ENCODE measurements at regions of chr4 and their contacts with region 1.

Region 1: DNA sequence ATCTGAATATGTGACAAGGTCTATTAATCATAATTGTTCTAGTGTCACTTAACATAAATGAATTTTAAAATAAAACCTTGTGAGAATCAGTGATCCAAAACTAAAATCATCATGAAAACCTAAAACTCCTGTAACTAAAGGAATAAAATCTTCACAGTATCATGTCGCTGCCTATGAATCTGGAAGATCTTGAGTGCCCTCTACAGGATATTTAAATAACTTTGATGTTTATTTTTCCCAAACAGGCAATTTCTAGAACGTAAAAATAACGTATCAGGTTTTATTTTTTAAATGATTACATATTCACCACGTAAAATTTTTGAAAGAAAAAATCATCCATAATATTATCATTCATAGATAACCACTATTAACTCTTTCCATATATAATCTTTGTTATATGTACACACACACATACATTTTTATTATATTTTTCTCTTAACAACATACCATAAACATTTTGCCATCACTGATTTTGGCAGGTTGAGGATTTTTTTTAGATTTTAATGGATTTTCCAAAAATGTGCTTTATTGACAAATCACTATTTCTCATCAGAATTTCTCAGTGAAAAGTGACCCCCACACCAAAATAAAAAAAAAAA is 79.6 kb downstream of the COMMD8 start:
- DNase-seq: no peak
- H3K4me3 Mint-ChIP-seq: no peak overlapping the region
- H3K27ac Mint-ChIP-seq: no peak overlapping the region
- H3K4me1 Mint-ChIP-seq: no peaks in the 10 kb centered on the region
- H3K27me3 Mint-ChIP-seq: no peaks in the 10 kb centered on the region

Region 2: DNA sequence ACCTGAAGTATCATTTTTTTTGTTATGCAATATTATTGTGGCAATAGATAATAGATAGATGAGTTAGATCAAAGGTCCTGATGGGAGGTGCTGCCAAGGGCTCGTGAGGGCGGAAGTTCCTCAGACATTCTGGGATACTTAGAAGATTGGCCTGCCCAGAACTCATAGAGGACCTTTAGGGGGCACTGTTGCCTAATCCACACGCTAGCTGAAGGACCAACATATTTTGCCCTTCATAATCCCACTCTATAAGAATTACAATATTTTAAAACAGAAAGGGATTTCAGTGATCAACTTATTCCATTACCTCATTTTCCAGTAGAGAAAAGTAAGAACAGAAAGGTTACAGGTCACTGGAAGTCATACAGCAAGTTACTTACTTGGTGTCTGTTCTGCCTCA is 451.9 kb before region 1 on chr4:
- intact Hi-C with region 1: loop called (anchors 10 kb)
- DNase-seq: no peak
- H3K4me3 Mint-ChIP-seq: no peak overlapping the region
- H3K27ac Mint-ChIP-seq: no peak overlapping the region
- H3K4me1 Mint-ChIP-seq: no peaks in the 10 kb centered on the region
- H3K27me3 Mint-ChIP-seq: no peaks in the 10 kb centered on the region

Region 3: GRCh38 chr4:47128991-47129390 is 254.9 kb before region 1 on chr4:
- intact Hi-C with region 1: loop called (anchors 5 kb)
- DNase-seq: no peak
- H3K4me3 Mint-ChIP-seq: no peak overlapping the region
- H3K27ac Mint-ChIP-seq: no peak overlapping the region
- H3K4me1 Mint-ChIP-seq: no peaks in the 10 kb centered on the region
- H3K27me3 Mint-ChIP-seq: no peaks in the 10 kb centered on the region

Region 4: GRCh38 chr4:47427935-47428334 is 44.0 kb after region 1 on chr4:
- intact Hi-C with region 1: no loop called
- DNase-seq: no peak
- H3K4me3 Mint-ChIP-seq: no peak overlapping the region
- H3K27ac Mint-ChIP-seq: no peak overlapping the region
- H3K4me1 Mint-ChIP-seq: no peaks in the 10 kb centered on the region
- H3K27me3 Mint-ChIP-seq: peaks cover 8% of the 10 kb centered on the region

Region 5: DNA sequence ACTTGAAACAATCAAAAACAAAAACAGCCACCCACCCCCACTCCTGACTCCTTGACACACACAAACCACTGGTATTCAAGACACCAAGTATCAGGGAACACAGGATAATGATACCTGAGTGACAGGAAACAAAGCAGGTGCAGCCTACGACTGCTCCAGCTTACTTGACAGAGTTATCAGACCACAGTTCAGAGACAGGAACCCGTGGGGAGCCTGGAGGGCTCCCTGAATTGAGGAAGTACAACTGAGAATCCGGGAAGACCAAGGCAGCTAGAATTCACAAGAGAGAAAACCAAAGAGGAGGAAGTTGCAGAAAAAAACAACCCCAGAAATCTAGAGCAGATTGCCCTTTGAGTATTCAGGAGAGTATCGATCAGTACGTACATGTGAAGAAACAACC is 59.1 kb after region 1 on chr4:
- intact Hi-C with region 1: no loop called
- DNase-seq: no peak
- H3K4me3 Mint-ChIP-seq: no peak overlapping the region
- H3K27ac Mint-ChIP-seq: no peak overlapping the region
- H3K4me1 Mint-ChIP-seq: peaks cover 7% of the 10 kb centered on the region
- H3K27me3 Mint-ChIP-seq: no peaks in the 10 kb centered on the region

Region 6: DNA sequence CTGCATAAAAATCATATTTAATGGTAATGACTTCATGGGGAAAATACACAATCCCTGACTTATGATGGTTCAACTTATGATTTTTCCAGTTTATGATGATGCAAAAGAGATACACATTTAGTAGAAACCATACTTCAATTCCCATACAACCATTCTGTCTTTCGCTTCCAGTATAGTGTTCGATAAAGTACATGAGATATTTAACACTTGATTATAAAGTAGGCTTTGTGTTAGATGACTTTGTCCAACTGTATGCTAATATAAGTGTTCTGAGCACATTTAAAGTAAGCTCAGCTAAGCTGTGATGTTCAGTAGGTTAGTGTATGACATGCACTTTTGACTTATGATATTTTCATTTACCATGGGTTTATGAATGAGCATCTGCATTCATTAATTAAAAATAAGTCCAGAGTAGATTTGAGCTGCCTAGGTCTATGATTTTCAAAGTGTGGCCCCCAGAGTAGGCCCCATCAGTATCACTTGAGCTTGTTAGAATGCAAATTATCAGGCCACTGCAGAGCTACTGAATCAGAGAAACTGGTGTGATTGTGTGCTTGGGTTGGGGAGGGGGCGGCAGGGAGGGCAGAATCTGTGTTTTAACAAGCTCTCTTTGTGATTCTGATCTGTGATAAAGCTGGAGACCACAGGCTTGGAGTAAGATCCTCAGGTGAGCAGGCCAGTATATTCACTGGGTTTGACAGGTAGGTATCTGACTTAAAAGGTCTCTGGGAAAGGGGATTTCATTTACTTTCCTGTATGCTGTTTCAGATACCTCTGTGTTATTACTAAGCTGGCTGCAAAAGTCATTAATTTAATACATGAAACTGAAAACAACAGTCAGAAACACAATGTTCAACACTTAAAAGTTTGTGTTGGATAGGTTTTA is 109.6 kb after region 1 on chr4:
- intact Hi-C with region 1: no loop called
- DNase-seq: no peak
- H3K4me3 Mint-ChIP-seq: no peak overlapping the region
- H3K27ac Mint-ChIP-seq: no peak overlapping the region
- H3K4me1 Mint-ChIP-seq: peaks cover 5% of the 10 kb centered on the region
- H3K27me3 Mint-ChIP-seq: peaks cover 4% of the 10 kb centered on the region

Region 7: GRCh38 chr4:47590325-47590724 is 206.4 kb after region 1 on chr4:
- intact Hi-C with region 1: no loop called
- DNase-seq: no peak
- H3K4me3 Mint-ChIP-seq: no peak overlapping the region
- H3K27ac Mint-ChIP-seq: no peak overlapping the region
- H3K4me1 Mint-ChIP-seq: peaks cover 3% of the 10 kb centered on the region
- H3K27me3 Mint-ChIP-seq: no peaks in the 10 kb centered on the region

Measured in activated T-helper 2 cell treated with anti-CD3 and anti-CD28 coated beads, Interferon-gamma antibody, Interleukin-2, Interleukin-4, amounts not matched to agents 10 μg/mL and 5 μg/mL and 100 μg/mL, durations not matched to agents 14 hours and 24 hours and 36 hours (primary cell).